Mammary epithelial cell (primary cell): ENCODE measurements at regions of chr2 and their contacts with region 1.

Region 1: DNA sequence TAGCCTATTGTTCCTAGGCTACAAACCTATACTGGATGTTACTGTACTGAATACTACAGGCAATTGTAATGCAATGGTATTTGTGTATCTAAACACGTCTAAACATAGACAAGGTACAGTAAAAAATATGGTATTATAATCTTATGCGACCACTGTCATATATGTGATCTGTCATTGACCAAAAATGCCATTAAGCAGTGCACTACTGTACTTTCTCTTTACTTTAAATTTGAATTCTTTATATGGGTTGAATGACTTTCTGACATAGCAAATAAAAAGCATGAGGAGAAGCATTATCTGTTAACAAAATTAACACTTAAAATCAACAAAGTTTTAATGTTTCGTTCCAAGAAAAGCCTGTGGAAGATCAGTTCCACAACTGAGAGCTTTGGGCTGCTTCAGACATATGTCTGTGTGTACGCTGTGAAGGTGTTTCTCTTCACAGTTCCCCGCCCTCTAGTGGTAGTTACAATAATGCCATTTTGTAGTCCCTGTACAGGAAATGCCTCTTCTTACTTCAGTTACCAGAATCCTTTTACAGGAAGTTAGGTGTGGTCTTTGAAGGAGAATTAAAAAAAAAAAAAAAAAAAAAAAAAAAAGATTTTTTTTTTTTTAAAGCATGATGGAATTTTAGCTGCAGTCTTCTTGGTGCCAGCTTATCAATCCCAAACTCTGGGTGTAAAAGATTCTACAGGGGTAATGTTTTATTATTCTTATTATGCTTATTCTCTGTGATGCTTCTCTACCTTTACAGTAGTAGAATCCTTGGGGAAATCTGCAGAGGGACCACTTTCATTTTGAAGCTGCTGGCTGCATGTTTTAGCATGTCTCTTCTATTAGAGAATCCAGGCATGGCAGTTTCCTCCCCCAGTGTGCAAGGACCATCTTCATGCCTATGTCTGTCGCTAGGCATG is 54.5 kb downstream of the SCN2A start:
- DNase-seq: peak; percentile 88
- H3K4me3 ChIP-seq: peak overlapping the region; percentile 62 to 95 (median 93)
- H3K27ac ChIP-seq: no peak overlapping the region
- H3K4me1 ChIP-seq: peaks cover 6% of the 10 kb centered on the region
- H3K27me3 ChIP-seq: no peaks in the 10 kb centered on the region
- CTCF ChIP-seq: peak; percentile 84 to 96

Region 2: DNA sequence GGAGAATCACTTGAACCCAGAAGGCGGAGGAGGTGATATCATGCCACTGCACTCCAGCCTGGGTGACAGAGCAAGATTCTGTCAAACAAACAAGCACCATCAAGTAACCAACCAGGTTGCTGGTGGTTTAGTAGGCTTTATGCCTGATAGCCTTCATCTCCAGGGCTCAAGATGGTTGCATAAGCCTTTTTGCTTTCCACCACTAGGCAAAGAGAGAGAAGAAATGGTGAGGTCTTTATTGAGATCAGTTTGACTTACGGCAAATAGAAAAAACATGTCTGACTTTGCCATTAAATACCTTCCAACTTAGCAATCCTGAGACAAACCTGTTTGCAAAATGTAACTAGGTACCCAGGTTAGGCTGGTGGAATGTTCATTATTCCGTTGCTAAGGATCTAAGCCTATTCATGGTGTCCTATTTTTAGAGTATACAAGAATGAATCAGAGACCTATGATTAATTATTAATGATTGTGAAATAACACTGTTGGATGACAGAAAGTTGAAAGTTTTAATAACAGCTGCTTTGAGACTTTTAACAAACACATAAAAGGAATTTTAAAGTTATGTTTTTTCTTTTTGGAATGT is 284.9 kb before region 1 on chr2:
- CTCF ChIA-PET with region 1: no interaction called
- dilution Hi-C with region 1: no loop called
- in situ Hi-C with region 1: loop called in 1 of 2 experiments (anchors 10 kb)
- intact Hi-C with region 1: no loop called
- DNase-seq: peak; percentile 98
- H3K4me3 ChIP-seq: peak overlapping the region in 2 of 3 experiments; percentile 7 to 12
- H3K27ac ChIP-seq: peak overlapping the region; percentile 96
- H3K4me1 ChIP-seq: peaks cover 40% of the 10 kb centered on the region
- H3K27me3 ChIP-seq: no peaks in the 10 kb centered on the region
- CTCF ChIP-seq: no peak